Gastrocnemius medialis (tissue), 4 donors: ENCODE measurements at regions of chr1 and their contacts with region 1.

Region 1: DNA sequence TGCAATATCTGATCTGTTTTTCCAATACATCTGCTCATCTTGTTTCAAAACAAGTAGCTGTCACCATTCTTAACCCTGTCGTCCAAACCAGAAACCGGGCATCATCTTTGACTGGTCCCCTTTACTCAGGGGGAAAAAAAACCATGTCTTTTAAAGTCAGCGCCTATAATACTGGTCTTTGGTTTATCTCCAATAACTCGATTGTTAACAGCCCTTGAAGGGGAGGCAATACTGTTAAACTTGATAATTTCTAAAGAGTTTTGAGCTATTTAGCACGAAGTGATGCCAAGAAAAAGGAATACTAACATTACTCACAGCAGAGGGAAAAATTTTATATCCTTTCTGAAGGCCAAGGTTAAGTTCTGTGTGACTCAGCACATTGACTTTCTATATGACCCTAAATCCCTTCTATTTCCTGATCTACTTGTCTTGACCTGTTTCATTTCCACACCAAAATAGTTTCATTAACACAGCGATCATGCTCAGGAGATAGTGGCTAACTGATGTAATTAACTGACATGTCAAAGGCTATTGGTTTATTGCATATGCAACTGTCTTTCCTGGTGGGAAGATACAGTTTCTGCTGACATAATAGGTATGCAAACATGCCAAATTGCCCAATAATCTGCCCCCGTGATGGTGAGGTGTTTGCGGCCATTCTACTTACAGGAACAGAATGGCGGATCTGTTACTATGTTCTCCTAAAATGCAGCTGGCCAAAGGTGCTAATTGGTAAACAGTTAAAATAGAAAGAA is 59.1 kb downstream of the NFIA start:
- DNase-seq: peak; percentile 62 to 73
- ATAC-seq: peak; percentile 76 to 84
- H3K4me3 ChIP-seq: peak overlapping the region in 3 of 4 donors; percentile 1 to 32 (median 12)
- H3K27ac ChIP-seq: peak overlapping the region; percentile 74 to 81 (median 78)
- H3K4me1 ChIP-seq: peaks cover 49 to 55% of the 10 kb centered on the region in 2 donors
- H3K27me3 ChIP-seq: no peaks in the 10 kb centered on the region
- CTCF ChIP-seq: no peak
- POLR2A ChIP-seq: no peak

Region 2: DNA sequence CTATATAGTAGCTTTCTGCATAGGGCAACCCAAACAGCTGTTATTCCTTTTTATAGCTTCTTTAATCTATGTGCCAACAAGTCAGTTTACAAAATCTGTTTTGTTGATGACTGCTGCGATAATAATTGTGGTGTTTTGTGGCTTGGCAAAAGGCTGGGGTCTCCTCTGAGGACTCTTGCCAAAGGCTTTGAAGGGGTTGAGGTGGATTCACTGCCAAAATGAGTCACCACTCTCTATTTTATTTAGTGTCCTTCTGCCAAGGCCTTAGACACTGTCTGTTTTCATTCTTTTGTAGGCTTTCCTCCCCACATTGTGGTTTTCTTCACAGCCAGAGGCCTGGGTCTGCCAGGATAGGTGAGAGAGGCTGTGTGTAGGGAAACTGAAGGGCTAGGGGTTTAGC is 102.6 kb after region 1 on chr1:
- in situ Hi-C with region 1: no loop called
- intact Hi-C with region 1: loop called (anchors 5 kb)
- DNase-seq: peak in 1 of 2 donors; percentile 31
- ATAC-seq: peak; percentile 23 to 58
- H3K4me3 ChIP-seq: no peak overlapping the region
- H3K27ac ChIP-seq: peak overlapping the region; percentile 83 to 89 (median 86)
- H3K4me1 ChIP-seq: peaks cover 69% of the 10 kb centered on the region in 2 donors
- H3K27me3 ChIP-seq: no peaks in the 10 kb centered on the region
- CTCF ChIP-seq: no peak
- POLR2A ChIP-seq: no peak

Region 3: GRCh38 chr1:61491497-61491896 is 350.0 kb after region 1 on chr1:
- in situ Hi-C with region 1: no loop called
- intact Hi-C with region 1: no loop called
- DNase-seq: no peak
- ATAC-seq: peak in 1 of 2 donors; percentile 42
- H3K4me3 ChIP-seq: no peak overlapping the region
- H3K27ac ChIP-seq: no peak overlapping the region
- H3K4me1 ChIP-seq: no peaks in the 10 kb centered on the region
- H3K27me3 ChIP-seq: no peaks in the 10 kb centered on the region
- CTCF ChIP-seq: no peak
- POLR2A ChIP-seq: no peak